HEK293T (cell line): ENCODE measurements at regions of chr12 and their contacts with region 1.

Region 1: DNA sequence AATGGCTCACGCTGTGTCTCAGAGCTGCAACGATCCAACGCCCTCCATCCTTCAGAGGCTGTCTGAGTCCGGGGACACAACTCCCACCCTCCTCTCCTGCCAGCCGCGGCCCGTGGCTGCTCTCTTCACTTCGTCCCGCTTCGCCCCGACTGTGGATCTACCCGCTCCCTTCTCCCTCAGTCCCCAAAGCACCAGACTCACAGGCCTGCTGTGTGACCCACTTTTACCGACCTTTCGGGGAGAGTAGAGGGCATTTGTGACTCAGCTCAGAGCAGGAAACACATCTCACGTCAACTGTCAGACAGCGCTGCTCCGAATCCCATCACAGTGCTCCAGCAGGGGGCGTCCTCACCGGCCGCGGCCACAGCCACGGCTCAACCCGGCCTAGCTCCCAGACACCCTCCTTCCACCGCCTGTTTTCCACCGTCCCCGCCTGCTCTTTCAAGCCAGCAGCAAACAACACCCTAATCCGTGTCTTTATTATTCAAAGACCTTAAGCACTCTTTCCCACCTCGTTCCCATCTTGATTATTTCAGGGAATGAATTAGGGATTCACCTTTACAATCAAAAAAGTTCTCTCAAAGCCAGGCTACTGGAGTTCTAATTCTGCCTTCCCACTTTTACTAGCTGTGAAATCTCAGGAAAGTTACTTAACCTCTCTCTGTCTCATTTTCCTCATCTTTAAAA is 5.0 kb upstream of the AQP2 start:
- DNase-seq: peak; percentile 92

Region 2: DNA sequence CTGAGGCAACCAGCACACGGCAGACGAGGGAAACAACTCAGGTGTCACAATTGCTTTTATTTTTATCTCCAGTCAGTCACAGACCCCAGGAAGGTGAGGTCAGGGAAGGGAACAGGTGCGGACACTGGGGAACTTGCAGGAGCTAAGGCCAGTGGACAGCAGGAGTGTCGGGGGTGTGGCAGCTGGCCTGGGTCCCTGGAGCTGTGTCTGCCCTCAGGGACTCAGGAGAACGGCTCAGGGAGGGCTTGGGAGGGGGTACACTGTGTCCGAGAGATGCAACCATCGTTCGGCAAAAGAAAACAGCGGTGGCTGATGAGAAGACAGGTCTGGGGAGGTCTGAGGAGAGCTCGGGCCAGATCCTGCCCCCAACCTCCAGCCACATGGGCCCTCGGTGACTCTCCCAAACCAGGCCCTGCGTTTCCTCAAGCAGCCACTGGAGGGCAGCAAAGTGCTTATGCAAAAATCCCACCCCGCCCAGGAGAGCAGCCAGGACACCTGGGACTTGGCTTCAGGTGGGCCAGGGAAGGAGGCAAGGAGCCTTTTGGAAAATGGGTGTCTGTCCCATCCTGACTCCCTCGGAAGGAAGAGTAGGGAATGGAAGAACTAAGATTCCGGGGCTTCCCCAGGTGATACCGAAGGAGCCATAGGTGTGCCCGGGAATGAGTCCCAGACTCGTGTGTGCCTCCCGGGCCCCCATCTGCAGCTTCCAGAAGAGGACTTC is 78.5 kb before region 1 on chr12:
- CTCF ChIA-PET with region 1: interaction called, 25 read pairs
- POLR2A ChIA-PET with region 1: interaction called, 8 read pairs
- DNase-seq: peak; percentile 89

Region 3: GRCh38 chr12:49904601-49905000 is 40.9 kb before region 1 on chr12:
- CTCF ChIA-PET with region 1: no interaction called
- POLR2A ChIA-PET with region 1: no interaction called
- DNase-seq: no peak

Region 4: GRCh38 chr12:49925433-49926204 is 19.9 kb before region 1 on chr12:
- CTCF ChIA-PET with region 1: interaction called, 11 read pairs
- POLR2A ChIA-PET with region 1: no interaction called
- DNase-seq: no peak

Region 5: DNA sequence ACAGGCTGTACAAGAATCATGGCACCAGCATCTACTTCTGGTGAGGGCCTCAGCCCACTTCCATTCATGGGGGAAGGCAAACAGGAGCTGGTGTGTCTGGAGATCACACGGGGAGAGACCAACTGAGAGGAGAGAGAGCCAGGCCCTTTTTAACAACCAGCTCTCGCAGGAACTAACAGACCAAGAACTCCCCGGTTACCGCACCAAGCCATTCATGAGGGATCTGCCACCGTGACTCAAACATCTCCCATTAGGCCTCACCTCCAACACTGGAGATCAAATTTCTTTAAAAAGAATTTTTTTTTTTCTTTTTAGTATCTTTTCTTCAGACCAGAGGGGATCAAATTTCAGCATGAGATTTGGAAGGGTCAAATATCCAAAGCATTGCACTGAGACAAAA is 11.7 kb before region 1 on chr12:
- CTCF ChIA-PET with region 1: interaction called, 20 read pairs
- POLR2A ChIA-PET with region 1: interaction called, 5 read pairs
- DNase-seq: no peak

Region 6: GRCh38 chr12:49959570-49960465 is 14.3 kb after region 1 on chr12:
- CTCF ChIA-PET with region 1: interaction called, 14 read pairs
- POLR2A ChIA-PET with region 1: interaction called, 3 read pairs
- DNase-seq: no peak

Region 7: GRCh38 chr12:49967042-49967776 is 21.7 kb after region 1 on chr12:
- CTCF ChIA-PET with region 1: interaction called, 14 read pairs
- POLR2A ChIA-PET with region 1: no interaction called
- DNase-seq: peak; percentile 91

Region 8: DNA sequence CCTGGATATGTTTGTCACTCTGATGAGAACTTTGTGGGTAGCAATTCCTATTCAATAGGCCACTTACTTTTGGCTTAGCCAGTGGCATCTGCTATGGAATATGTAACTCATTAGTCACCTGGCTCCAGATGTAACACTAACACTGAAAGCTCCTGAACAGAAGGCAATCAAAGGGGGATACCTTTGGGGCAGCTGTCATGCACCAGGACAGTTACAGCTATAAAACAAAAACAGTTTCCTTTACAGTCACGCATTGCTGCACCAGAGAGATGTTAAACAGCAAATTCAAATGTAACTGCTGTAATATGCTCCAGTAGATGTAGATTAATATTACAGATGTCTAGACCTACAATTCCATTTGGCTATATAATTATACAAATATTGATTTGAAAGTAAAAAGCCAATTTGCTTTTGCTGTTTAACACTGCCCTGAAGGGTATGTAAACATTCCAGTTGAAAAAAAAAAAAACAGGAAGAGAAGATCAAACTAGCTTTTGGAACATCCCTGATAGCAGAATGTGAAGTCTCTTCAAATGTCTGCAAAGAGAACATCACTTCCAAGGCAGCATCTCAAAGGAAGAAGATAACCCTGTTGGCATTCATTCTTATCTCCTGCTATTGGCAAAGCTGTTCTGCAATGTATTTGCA is 61.4 kb after region 1 on chr12:
- CTCF ChIA-PET with region 1: no interaction called
- POLR2A ChIA-PET with region 1: no interaction called
- DNase-seq: no peak